ENCODE measurements at regions of chr2 and their contacts with region 1.

Region 1: GRCh38 chr2:204170411-204170810 is 233.8 kb downstream of the ICOS start:
- DNase-seq: no peak
- ATAC-seq: no peak
- H3K4me3 ChIP-seq: no peak overlapping the region
- H3K4me3 Mint-ChIP-seq: no peak overlapping the region
- H3K27ac ChIP-seq: no peak overlapping the region
- H3K27ac Mint-ChIP-seq: no peak overlapping the region
- H3K4me1 ChIP-seq: no peaks in the 10 kb centered on the region
- H3K4me1 Mint-ChIP-seq: no peaks in the 10 kb centered on the region
- H3K27me3 ChIP-seq: no peaks in the 10 kb centered on the region
- H3K27me3 Mint-ChIP-seq: no peaks in the 10 kb centered on the region
- CTCF ChIP-seq: no peak

Region 2: DNA sequence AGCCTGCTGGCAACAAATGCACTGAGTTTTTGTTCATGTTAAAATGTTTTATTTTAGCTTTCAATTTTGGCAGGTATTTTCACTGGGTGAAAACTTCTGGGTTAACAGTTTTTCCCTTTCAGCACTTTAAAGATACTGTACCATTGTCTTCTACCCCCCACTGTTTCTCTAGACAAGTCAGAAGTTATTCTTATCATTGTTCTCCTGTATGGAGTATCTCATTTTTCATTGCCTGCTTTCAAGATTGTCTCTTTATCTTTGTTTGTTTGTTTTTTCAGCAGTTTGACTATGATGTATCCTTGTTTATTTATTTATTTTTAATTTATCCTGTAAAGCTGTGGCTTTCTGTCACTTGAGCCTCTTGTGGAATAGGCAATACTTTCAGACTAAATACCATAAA is 43.2 kb after region 1 on chr2:
- CTCF ChIA-PET with region 1: no interaction called
- POLR2A ChIA-PET with region 1: no interaction called
- intact Hi-C with region 1: loop called in 1 of 2 experiments (anchors 1 kb)
- DNase-seq: no peak
- ATAC-seq: no peak
- H3K4me3 ChIP-seq: no peak overlapping the region
- H3K4me3 Mint-ChIP-seq: no peak overlapping the region
- H3K27ac ChIP-seq: no peak overlapping the region
- H3K27ac Mint-ChIP-seq: no peak overlapping the region
- H3K4me1 ChIP-seq: no peaks in the 10 kb centered on the region
- H3K4me1 Mint-ChIP-seq: no peaks in the 10 kb centered on the region
- H3K27me3 ChIP-seq: no peaks in the 10 kb centered on the region
- H3K27me3 Mint-ChIP-seq: peaks cover 7% of the 10 kb centered on the region
- CTCF ChIP-seq: no peak

Region 3: GRCh38 chr2:204691911-204692510 is 521.6 kb after region 1 on chr2:
- CTCF ChIA-PET with region 1: no interaction called
- POLR2A ChIA-PET with region 1: no interaction called
- intact Hi-C with region 1: no loop called
- DNase-seq: peak in 2 of 9 experiments; percentile 29 to 44
- ATAC-seq: no peak
- H3K4me3 ChIP-seq: no peak overlapping the region
- H3K4me3 Mint-ChIP-seq: no peak overlapping the region
- H3K27ac ChIP-seq: no peak overlapping the region
- H3K27ac Mint-ChIP-seq: no peak overlapping the region
- H3K4me1 ChIP-seq: peaks cover 5% of the 10 kb centered on the region
- H3K4me1 Mint-ChIP-seq: peaks cover 8% of the 10 kb centered on the region
- H3K27me3 ChIP-seq: no peaks in the 10 kb centered on the region
- H3K27me3 Mint-ChIP-seq: no peaks in the 10 kb centered on the region
- CTCF ChIP-seq: peak; percentile 44